Activated CD4-positive, alpha-beta T cell treated with anti-CD3 and anti-CD28 coated beads for 36 hours (primary cell): ENCODE measurements at regions of chr1 and their contacts with region 1.

Region 1: GRCh38 chr1:152047730-152048402 is 11.1 kb upstream of the S100A11 start:
- DNase-seq: peak; percentile 94
- ATAC-seq: peak; percentile 90
- H3K4me3 Mint-ChIP-seq: peak overlapping the region; percentile 72
- H3K27ac Mint-ChIP-seq: peak overlapping the region; percentile 99
- H3K4me1 Mint-ChIP-seq: peaks cover 25% of the 10 kb centered on the region
- H3K27me3 Mint-ChIP-seq: peaks cover 2% of the 10 kb centered on the region

Region 2: GRCh38 chr1:151945725-151946364 is 102.0 kb before region 1 on chr1:
- CTCF ChIA-PET with region 1: interaction called, 6 read pairs
- POLR2A ChIA-PET with region 1: no interaction called
- intact Hi-C with region 1: loop called in 1 of 2 experiments (anchors 1 kb)
- DNase-seq: peak; percentile 82
- ATAC-seq: peak; percentile 45
- H3K4me3 Mint-ChIP-seq: peak overlapping the region; percentile 42
- H3K27ac Mint-ChIP-seq: peak overlapping the region; percentile 88
- H3K4me1 Mint-ChIP-seq: peaks cover 42% of the 10 kb centered on the region
- H3K27me3 Mint-ChIP-seq: no peaks in the 10 kb centered on the region

Region 3: GRCh38 chr1:152034646-152035405 is 13.0 kb before region 1 on chr1:
- CTCF ChIA-PET with region 1: interaction called, 61 read pairs
- POLR2A ChIA-PET with region 1: interaction called, 8 read pairs
- intact Hi-C with region 1: loop called (anchors 1 kb)
- DNase-seq: peak; percentile 82
- ATAC-seq: peak; percentile 64
- H3K4me3 Mint-ChIP-seq: peak overlapping the region; percentile 82
- H3K27ac Mint-ChIP-seq: peak overlapping the region; percentile 90
- H3K4me1 Mint-ChIP-seq: peaks cover 41% of the 10 kb centered on the region
- H3K27me3 Mint-ChIP-seq: no peaks in the 10 kb centered on the region

Region 4: DNA sequence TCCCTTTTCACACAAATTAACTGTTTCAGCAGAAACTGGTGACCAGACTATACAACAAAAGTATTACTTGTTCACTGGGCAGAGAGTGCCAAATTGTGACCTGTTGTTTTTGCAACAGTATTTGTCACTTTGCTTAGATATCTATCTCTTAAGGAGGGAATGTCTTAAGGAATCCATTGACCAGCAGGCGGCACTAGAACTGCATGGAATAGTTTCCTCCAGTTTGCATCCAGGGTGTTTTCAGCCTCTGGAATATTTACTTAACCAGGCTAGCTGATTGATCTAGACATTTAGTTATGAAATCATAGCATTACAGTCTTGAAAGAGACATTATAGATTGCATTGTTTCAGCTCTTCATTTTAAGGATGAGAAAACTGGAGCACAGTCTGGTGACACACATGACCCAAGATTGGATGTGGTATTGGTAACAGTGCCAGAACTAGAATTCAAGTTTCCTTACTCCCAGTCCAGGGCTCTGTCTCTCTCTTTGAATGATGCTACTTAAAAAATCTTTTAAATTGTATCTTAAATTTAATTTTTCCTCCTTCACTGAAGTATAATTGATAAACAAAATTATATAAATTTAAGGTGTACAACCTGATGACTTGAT is 94.2 kb after region 1 on chr1:
- CTCF ChIA-PET with region 1: no interaction called
- POLR2A ChIA-PET with region 1: no interaction called
- intact Hi-C with region 1: loop called in 1 of 2 experiments (anchors 2 kb)
- DNase-seq: peak; percentile 55
- ATAC-seq: no peak
- H3K4me3 Mint-ChIP-seq: no peak overlapping the region
- H3K27ac Mint-ChIP-seq: no peak overlapping the region
- H3K4me1 Mint-ChIP-seq: peaks cover 11% of the 10 kb centered on the region
- H3K27me3 Mint-ChIP-seq: peaks cover 50% of the 10 kb centered on the region

Region 5: GRCh38 chr1:152440635-152441471 is 393.0 kb after region 1 on chr1:
- CTCF ChIA-PET with region 1: interaction called, 5 read pairs
- POLR2A ChIA-PET with region 1: no interaction called
- intact Hi-C with region 1: loop called in 1 of 2 experiments (anchors 1 kb)
- DNase-seq: peak; percentile 81
- ATAC-seq: peak; percentile 99
- H3K4me3 Mint-ChIP-seq: no peak overlapping the region
- H3K27ac Mint-ChIP-seq: no peak overlapping the region
- H3K4me1 Mint-ChIP-seq: no peaks in the 10 kb centered on the region
- H3K27me3 Mint-ChIP-seq: peaks cover 19% of the 10 kb centered on the region

Region 6: DNA sequence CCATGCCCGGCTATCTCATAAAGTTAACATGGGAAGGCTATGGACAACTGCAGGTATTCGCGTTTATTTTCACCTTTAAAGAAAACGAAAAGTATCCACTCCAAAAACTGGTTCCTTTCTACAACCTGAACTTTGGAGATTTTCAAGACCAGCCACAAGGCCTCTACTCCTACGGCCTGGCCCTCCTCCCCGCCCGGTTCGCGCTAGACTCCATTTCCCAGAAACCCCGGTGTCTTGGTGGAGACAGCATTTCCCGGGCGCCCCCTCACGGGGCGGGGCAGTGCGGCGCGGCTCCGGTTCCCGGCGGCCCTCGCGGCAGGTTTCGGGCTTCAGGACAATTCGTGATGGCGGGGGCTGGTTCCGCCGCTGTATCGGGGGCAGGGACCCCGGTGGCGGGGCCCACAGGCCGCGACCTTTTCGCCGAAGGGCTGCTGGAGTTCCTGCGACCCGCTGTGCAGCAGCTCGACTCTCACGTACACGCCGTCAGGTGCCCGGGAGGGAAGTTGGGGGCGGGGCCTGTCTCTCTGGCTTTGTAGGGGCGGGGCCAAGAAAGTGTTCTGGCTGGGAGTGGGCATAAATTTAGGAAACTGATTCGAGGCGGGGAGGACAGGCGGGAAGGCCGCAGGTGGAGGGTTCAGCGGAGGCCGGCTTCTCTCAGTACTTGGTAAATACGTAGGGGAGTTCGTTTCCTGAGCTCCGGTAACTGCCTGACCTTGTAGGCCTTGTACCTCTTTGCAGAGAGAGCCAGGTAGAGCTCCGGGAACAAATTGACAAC is 1610.7 kb after region 1 on chr1 and contains the start of gene SNAPIN:
- CTCF ChIA-PET with region 1: no interaction called
- POLR2A ChIA-PET with region 1: no interaction called
- intact Hi-C with region 1: loop called in 1 of 2 experiments (anchors 5 kb)
- DNase-seq: peak; percentile 96
- ATAC-seq: peak; percentile 96
- H3K4me3 Mint-ChIP-seq: peak within 1 kb of the TSS; percentile 95
- H3K27ac Mint-ChIP-seq: peak within 1 kb of the TSS; percentile 90
- H3K4me1 Mint-ChIP-seq: peaks cover 13% of the 10 kb centered on the region
- H3K27me3 Mint-ChIP-seq: no peaks in the 10 kb centered on the region
- total RNA-seq, gene SNAPIN: 34.2 to 38.4 TPM